ENCODE measurements at regions of chr5 and their contacts with region 1.

Region 1: GRCh38 chr5:112146323-112147226 is 272.5 kb downstream of the EPB41L4A start:
- DNase-seq: peak; percentile 74
- ATAC-seq: peak; percentile 82
- H3K4me3 ChIP-seq: no peak overlapping the region
- H3K27ac ChIP-seq: no peak overlapping the region; the same call in 1 of the 2 replicates
- H3K4me1 ChIP-seq: peaks cover 13% of the 10 kb centered on the region; the same call in 1 of the 2 replicates
- H3K27me3 ChIP-seq: no peaks in the 10 kb centered on the region
- CTCF ChIP-seq: peak; percentile 59 to 89 (median 67); a peak in 5 of 6 replicates
- EP300 ChIP-seq: 0 out of 4 replicates have a peak, but pooled peaks of 1 of the 2 experiments have one; percentile 36
- POLR2A ChIP-seq: no peak
- RAD21 ChIP-seq: peak; percentile 99

Region 2: DNA sequence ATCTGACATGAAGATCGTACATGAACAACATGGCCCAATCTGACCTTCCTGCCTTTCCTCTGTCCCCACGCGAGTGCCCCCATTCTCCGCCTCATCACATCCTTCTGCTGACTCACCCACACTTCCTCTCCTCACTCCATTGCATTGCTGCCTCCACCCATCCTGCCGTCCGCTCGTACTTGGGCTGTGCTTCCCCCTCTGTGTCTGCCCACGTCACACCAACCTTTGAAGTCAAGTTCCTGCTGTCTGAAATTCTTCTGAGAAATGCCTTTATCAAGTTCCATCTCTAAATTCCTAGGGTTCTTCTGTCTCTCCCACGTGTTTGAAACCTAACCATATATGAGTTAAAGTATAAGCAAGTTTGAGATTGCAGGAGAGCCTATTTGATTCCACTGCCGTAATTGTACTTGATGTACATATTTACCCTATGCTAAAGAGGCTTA is 616.3 kb before region 1 on chr5:
- CTCF ChIA-PET with region 1: interaction called, 63 read pairs
- POLR2A ChIA-PET with region 1: no interaction called
- RAD21 ChIA-PET with region 1: interaction called, 21 read pairs
- SMC1A ChIA-PET with region 1: interaction called, 25 read pairs
- in situ Hi-C with region 1: no loop called
- intact Hi-C with region 1: loop called (anchors 5 kb)
- DNase-seq: peak; percentile 57
- ATAC-seq: peak; percentile 98
- H3K4me3 ChIP-seq: no peak overlapping the region
- H3K27ac ChIP-seq: peak overlapping the region; percentile 37; the same call in 1 of the 2 replicates
- H3K4me1 ChIP-seq: peaks cover 4% of the 10 kb centered on the region
- H3K27me3 ChIP-seq: no peaks in the 10 kb centered on the region
- CTCF ChIP-seq: no peak
- EP300 ChIP-seq: no peak
- POLR2A ChIP-seq: peak; percentile 39; the same call in 1 of the 2 replicates
- RAD21 ChIP-seq: no peak

Region 3: DNA sequence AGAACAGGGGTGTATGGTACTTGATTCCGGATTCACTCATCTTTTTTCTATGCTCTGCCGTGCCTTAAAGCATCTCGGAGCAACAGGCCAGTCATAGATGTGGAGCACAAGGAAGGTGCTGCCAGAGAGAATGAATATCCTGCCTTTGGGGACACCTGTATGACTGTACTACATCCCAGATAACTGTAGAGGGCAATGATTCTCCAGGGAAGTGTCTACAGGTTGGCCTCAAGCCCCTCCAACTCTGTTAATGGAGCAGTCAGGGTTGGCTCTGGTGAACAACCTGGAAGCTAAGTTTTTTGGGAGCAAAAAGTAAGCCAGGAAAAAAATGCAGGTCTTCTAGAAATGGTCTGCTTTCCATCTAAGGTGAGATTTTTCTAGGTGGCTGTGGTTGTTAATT is 460.6 kb before region 1 on chr5:
- CTCF ChIA-PET with region 1: interaction called, 15 read pairs
- POLR2A ChIA-PET with region 1: no interaction called
- RAD21 ChIA-PET with region 1: interaction called, 11 read pairs
- SMC1A ChIA-PET with region 1: interaction called, 18 read pairs
- in situ Hi-C with region 1: loop called (anchors 5 kb)
- intact Hi-C with region 1: loop called (anchors 1 kb)
- DNase-seq: no peak
- ATAC-seq: peak; percentile 52
- H3K4me3 ChIP-seq: no peak overlapping the region
- H3K27ac ChIP-seq: no peak overlapping the region
- H3K4me1 ChIP-seq: no peaks in the 10 kb centered on the region
- H3K27me3 ChIP-seq: no peaks in the 10 kb centered on the region
- CTCF ChIP-seq: peak in 2 of 3 experiments; percentile 5 to 16; a peak in 1 of 6 replicates
- EP300 ChIP-seq: no peak
- POLR2A ChIP-seq: no peak
- RAD21 ChIP-seq: peak; percentile 37; the same call in 1 of the 2 replicates

Region 4: GRCh38 chr5:111742177-111742994 is 404.2 kb before region 1 on chr5:
- CTCF ChIA-PET with region 1: no interaction called
- POLR2A ChIA-PET with region 1: no interaction called
- RAD21 ChIA-PET with region 1: no interaction called
- SMC1A ChIA-PET with region 1: no interaction called
- in situ Hi-C with region 1: no loop called
- intact Hi-C with region 1: no loop called
- DNase-seq: no peak
- ATAC-seq: peak; percentile 37
- H3K4me3 ChIP-seq: 0 out of 2 replicates have a peak overlapping the region, but pooled peaks have one; percentile 6
- H3K27ac ChIP-seq: no peak overlapping the region
- H3K4me1 ChIP-seq: peaks cover 9% of the 10 kb centered on the region
- H3K27me3 ChIP-seq: no peaks in the 10 kb centered on the region
- CTCF ChIP-seq: no peak
- EP300 ChIP-seq: no peak
- POLR2A ChIP-seq: no peak
- RAD21 ChIP-seq: no peak

Region 5: GRCh38 chr5:111830333-111830732 is 316.2 kb before region 1 on chr5:
- CTCF ChIA-PET with region 1: interaction called, 9 read pairs
- POLR2A ChIA-PET with region 1: no interaction called
- RAD21 ChIA-PET with region 1: interaction called, 5 read pairs
- SMC1A ChIA-PET with region 1: interaction called, 7 read pairs
- in situ Hi-C with region 1: no loop called
- intact Hi-C with region 1: loop called (anchors 2 kb)
- DNase-seq: no peak
- ATAC-seq: no peak
- H3K4me3 ChIP-seq: no peak overlapping the region
- H3K27ac ChIP-seq: no peak overlapping the region
- H3K4me1 ChIP-seq: no peaks in the 10 kb centered on the region
- H3K27me3 ChIP-seq: no peaks in the 10 kb centered on the region
- CTCF ChIP-seq: no peak
- EP300 ChIP-seq: no peak
- POLR2A ChIP-seq: no peak
- RAD21 ChIP-seq: no peak

Region 6: GRCh38 chr5:112014783-112015395 is 131.7 kb before region 1 on chr5:
- CTCF ChIA-PET with region 1: interaction called, 3 read pairs
- POLR2A ChIA-PET with region 1: no interaction called
- RAD21 ChIA-PET with region 1: interaction called, 3 read pairs
- SMC1A ChIA-PET with region 1: interaction called, 4 read pairs
- in situ Hi-C with region 1: no loop called
- intact Hi-C with region 1: loop called (anchors 5 kb)
- DNase-seq: no peak
- ATAC-seq: no peak
- H3K4me3 ChIP-seq: no peak overlapping the region
- H3K27ac ChIP-seq: no peak overlapping the region
- H3K4me1 ChIP-seq: peaks cover 6% of the 10 kb centered on the region; the same call in 1 of the 2 replicates
- H3K27me3 ChIP-seq: no peaks in the 10 kb centered on the region
- CTCF ChIP-seq: no peak
- EP300 ChIP-seq: no peak
- POLR2A ChIP-seq: no peak
- RAD21 ChIP-seq: no peak

Region 7: DNA sequence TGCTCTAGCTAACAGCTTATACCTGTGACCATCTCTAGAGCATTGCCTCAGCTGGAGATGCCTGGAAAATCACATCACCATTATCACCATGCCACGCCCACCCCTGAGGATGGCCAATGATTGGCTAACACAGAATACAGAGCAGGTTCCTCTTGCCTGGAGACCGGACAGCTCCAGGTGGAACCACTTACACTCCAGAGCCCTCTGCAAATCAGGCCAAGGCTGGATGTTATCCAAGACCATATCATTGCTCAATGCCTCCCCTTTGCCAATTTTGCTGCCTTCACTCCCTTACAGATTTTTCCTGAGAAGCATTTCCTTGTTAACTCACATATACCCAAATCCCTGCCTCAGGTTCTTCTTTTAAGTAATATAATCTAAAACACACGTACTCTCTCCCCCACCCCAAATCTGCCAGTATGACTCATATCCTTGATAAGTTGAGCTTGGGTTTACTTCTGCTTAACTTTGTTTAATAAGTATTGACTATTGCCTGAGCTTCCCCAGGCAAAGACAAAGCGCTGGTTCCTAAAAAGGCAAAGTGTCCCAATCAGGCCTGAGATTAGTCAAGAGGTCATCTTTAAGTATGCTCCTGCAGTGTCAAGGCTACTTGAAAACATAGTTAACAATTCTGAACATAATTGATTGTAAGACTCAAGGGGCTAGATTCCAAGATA is 37.1 kb before region 1 on chr5:
- CTCF ChIA-PET with region 1: interaction called, 4 read pairs
- POLR2A ChIA-PET with region 1: no interaction called
- RAD21 ChIA-PET with region 1: interaction called, 6 read pairs
- SMC1A ChIA-PET with region 1: interaction called, 18 read pairs
- in situ Hi-C with region 1: no loop called
- intact Hi-C with region 1: loop called (anchors 5 kb)
- DNase-seq: no peak
- ATAC-seq: peak; percentile 39
- H3K4me3 ChIP-seq: no peak overlapping the region
- H3K27ac ChIP-seq: no peak overlapping the region
- H3K4me1 ChIP-seq: no peaks in the 10 kb centered on the region
- H3K27me3 ChIP-seq: no peaks in the 10 kb centered on the region
- CTCF ChIP-seq: no peak
- EP300 ChIP-seq: no peak
- POLR2A ChIP-seq: no peak
- RAD21 ChIP-seq: no peak

Region 8: GRCh38 chr5:112253478-112254250 is 107.1 kb after region 1 on chr5:
- CTCF ChIA-PET with region 1: no interaction called
- POLR2A ChIA-PET with region 1: no interaction called
- RAD21 ChIA-PET with region 1: no interaction called
- SMC1A ChIA-PET with region 1: no interaction called
- in situ Hi-C with region 1: no loop called
- intact Hi-C with region 1: no loop called
- DNase-seq: no peak
- ATAC-seq: no peak
- H3K4me3 ChIP-seq: no peak overlapping the region
- H3K27ac ChIP-seq: no peak overlapping the region
- H3K4me1 ChIP-seq: no peaks in the 10 kb centered on the region
- H3K27me3 ChIP-seq: no peaks in the 10 kb centered on the region; a peak in 1 of 4 replicates
- CTCF ChIP-seq: no peak
- EP300 ChIP-seq: no peak
- POLR2A ChIP-seq: no peak
- RAD21 ChIP-seq: no peak